Activated T-helper 1 cell treated with anti-CD3 and anti-CD28 coated beads, Interleukin-12 subunit alpha, Interleukin-12 subunit beta, Interleukin-2, Interleukin-4 antibody, amounts not matched to agents 30 ng/mL and 10 ng/mL and 1 ng/mL, durations not matched to agents 14 hours and 24 hours and 36 hours (primary cell): ENCODE measurements at regions of chr6 and their contacts with region 1.

Region 1: GRCh38 chr6:139146317-139146726 is 11.4 kb downstream of the HECA start:
- DNase-seq: no peak
- H3K4me3 Mint-ChIP-seq: peak overlapping the region; percentile 65
- H3K27ac Mint-ChIP-seq: peak overlapping the region; percentile 85
- H3K4me1 Mint-ChIP-seq: peaks cover 92% of the 10 kb centered on the region
- H3K27me3 Mint-ChIP-seq: no peaks in the 10 kb centered on the region

Region 2: DNA sequence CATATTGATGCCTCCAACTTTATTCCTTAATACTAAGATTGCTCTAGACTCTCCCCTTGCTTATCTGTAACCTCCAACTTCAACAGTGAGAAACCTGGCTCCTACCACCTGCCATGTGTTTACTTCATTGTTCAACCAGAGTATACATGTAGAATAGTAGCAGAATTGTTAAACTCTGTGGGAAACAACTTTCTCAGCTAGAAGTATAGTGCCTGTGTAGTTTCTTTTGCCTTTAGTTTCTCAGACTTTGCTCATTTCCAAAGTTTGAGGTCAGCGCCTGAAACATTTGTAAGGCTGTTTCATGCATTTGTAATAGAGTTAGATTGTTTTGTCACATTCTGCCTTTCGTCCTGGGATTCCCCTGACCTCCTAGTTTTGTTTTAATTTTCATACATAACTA is 46.3 kb before region 1 on chr6:
- intact Hi-C with region 1: loop called (anchors 2 kb)
- DNase-seq: no peak
- H3K4me3 Mint-ChIP-seq: no peak overlapping the region
- H3K27ac Mint-ChIP-seq: peak overlapping the region; percentile 65
- H3K4me1 Mint-ChIP-seq: peaks cover 20% of the 10 kb centered on the region
- H3K27me3 Mint-ChIP-seq: no peaks in the 10 kb centered on the region

Region 3: DNA sequence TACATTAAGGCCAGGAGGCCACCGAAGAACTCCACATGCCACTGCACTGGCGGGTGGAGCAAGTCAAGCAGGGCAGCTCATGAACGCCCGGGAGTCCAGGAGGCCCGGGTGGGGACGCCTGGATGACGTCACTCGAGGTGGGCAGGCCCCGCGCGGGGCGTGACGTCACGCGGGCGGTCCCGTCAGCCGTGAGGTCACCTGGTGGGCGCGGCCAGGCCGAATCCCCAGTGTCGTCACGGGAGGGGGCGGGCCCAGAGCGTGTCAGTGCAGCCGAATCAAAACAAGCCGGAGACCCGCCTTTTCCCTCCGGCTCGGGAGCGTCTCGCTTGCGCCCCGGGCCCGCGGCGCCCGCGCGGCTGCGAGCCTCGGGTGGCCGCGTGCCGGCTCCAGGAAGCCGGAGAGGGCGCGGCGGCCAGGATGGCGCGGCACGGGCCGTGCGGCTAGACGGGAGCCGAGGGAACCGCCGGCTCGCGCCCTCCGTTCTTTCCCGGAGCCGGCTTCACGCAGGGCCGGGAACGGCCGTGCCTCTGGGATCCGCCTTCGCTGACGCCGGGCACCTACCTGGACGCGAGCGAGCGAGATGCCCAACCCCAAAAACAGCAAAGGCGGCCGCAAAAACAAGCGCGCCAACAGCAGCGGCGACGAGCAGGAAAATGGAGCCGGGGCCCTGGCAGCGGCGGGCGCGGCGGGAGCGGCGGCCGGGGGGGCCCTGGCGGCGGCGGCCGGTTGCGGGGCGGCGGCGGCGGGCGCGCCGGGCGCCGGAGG is 11.3 kb before region 1 on chr6 and contains the start of gene HECA:
- intact Hi-C with region 1: loop called (anchors 1 kb)
- DNase-seq: peak; percentile 97
- H3K4me3 Mint-ChIP-seq: peak within 1 kb of the TSS; percentile 85
- H3K27ac Mint-ChIP-seq: peak within 1 kb of the TSS; percentile 84
- H3K4me1 Mint-ChIP-seq: peaks cover 72% of the 10 kb centered on the region
- H3K27me3 Mint-ChIP-seq: no peaks in the 10 kb centered on the region
- total RNA-seq, gene HECA: 49.1 and 49.9 TPM in 2 replicates

Region 4: DNA sequence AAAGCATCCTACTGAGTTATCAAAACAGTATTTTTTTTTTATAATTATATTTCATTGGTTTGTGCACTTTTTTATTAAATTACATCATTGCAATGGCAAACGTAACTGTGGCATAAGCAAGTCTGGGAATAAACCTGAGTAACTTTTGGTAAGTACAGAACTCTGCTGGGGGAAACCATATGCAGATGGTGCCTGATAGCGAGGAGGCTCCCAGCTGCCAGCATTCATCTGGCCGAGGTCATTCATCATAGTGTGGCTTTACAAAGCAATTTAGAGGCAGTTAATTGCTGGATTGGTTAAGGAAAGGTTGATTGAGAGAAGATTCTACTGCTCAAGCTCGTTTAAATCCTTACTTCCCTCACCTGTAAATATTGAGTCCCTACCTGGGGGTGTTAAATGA is 41.2 kb after region 1 on chr6:
- intact Hi-C with region 1: loop called (anchors 1 kb)
- DNase-seq: no peak
- H3K4me3 Mint-ChIP-seq: no peak overlapping the region
- H3K27ac Mint-ChIP-seq: no peak overlapping the region
- H3K4me1 Mint-ChIP-seq: peaks cover 29% of the 10 kb centered on the region
- H3K27me3 Mint-ChIP-seq: no peaks in the 10 kb centered on the region